ENCODE measurements at regions of chr6 and their contacts with region 1.

Region 1: GRCh38 chr6:153242767-153243166 is 111.7 kb upstream of the RGS17 start:
- DNase-seq: no peak
- H3K4me3 ChIP-seq: no peak overlapping the region
- CTCF ChIP-seq: no peak
- POLR2A ChIP-seq: no peak

Region 2: DNA sequence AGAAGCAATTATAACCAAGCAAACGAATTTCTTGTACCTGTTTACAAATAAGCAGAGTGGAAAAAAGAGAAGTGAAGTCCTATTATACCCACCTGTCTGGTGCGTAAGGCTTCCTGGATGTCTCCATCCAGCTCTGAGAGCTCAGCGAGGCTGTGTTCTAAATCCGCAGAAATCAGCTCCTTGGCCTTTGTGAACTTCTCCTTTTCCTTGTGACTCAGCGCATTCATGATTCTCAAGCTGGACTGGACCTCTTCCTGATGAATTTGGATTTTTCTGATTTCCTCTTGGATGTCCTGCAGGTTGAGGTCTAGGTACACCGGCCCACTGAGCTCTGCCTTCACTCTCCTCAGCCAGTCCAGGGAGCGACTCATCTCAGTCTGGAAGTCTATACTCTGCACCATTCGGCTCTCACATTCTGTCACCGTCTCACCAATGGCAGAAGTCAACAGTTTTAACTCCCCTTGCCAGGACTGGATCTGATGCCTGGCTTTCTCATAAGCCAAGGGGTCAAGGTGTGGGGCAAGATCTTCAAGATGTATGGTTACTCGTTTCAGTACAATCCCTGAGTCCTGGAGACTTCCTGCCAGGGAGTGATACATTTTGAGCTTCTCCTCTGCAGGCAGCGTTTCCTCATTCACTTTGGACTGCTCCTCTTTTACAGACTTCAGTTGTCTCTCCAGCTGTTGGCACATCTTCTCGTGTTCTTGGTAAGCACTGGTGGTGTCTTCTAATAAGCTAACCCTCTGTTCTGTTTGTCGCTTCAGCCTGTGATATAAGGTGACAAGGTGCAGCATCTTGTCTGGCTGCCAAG is 912.9 kb before region 1 on chr6:
- intact Hi-C with region 1: loop called (anchors 10 kb)
- DNase-seq: no peak
- H3K4me3 ChIP-seq: no peak overlapping the region
- CTCF ChIP-seq: no peak
- POLR2A ChIP-seq: no peak

Region 3: DNA sequence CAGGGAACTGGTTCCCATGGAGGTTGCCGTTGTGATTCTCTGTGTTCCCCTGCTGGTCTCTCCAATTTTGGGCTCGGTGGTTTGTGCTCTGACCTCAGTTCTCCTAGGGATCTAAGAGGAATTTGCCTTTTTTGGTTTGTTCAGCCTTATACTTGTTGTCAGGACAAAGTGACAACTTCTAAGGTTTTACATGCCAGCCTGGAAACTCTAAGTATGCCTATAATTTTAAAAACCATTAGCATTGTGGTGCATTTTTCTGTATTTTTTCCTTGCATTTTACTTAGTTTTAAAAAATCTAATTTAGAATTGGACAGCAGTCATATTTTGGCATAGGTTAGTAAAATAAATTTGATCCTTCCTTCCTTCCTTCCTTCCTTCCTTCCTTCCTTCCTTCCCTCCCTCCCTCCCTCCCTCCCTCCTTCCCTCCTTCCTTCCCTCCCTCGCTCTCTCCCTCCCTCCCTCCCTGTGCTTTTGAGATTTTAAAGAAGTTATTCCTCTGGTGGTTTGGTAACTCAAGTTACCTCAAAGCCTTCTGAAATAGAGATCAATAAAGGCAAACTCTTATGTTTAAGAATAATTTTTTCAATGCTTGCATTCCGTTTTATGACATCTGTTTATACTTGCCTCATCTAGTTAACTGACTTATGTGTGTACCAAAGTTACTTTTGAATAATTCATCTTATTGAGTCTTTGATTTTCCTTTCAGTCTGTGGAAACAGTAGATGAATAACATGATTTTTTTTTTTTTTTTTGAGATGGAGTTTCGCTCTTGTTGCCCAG is 29.6 kb after region 1 on chr6:
- intact Hi-C with region 1: no loop called
- DNase-seq: no peak
- H3K4me3 ChIP-seq: no peak overlapping the region
- CTCF ChIP-seq: no peak
- POLR2A ChIP-seq: no peak

Measured in lower leg skin (tissue), 4 donors.